CD4-positive, alpha-beta T cell (primary cell): ENCODE measurements at regions of chr2 and their contacts with region 1.

Region 1: DNA sequence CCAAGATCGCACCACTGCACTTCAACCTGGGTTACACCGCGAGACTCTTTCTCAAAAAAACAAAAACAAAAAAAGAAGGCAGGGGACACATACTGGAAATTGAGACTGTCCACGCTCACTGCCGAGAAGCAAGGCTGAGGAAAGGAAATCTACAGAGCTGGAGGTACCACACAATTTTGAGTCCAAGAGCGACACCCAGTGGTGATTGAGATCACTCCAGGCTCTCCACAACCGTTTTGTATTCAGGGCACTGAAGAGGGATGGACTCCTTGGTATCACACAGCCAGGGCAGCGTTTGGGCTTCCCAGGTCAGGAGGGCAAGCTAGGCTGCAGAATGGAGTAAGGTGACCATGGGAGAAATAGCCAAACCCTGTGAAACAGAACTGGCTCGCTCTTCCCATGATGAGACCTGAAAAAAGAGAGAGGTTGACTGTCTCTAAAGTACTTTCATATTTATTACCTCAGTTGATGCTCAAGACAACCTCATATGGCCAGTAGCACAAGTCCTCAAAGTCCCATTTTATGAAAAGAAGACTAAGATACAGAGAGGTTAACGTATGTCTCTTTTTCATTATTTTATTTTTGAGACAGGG is 74.5 kb upstream of the YPEL5 start:
- DNase-seq: peak; percentile 17 to 75 (median 46)
- ATAC-seq: peak; percentile 71
- H3K4me3 ChIP-seq: no peak overlapping the region
- H3K4me3 Mint-ChIP-seq: no peak overlapping the region
- H3K27ac ChIP-seq: no peak overlapping the region
- H3K27ac Mint-ChIP-seq: no peak overlapping the region
- H3K4me1 ChIP-seq: peaks cover 3% of the 10 kb centered on the region
- H3K4me1 Mint-ChIP-seq: no peaks in the 10 kb centered on the region
- H3K27me3 ChIP-seq: peaks cover 17 to 21% of the 10 kb centered on the region in 2 experiments
- H3K27me3 Mint-ChIP-seq: peaks cover 45% of the 10 kb centered on the region
- CTCF ChIP-seq: peak; percentile 58

Region 2: DNA sequence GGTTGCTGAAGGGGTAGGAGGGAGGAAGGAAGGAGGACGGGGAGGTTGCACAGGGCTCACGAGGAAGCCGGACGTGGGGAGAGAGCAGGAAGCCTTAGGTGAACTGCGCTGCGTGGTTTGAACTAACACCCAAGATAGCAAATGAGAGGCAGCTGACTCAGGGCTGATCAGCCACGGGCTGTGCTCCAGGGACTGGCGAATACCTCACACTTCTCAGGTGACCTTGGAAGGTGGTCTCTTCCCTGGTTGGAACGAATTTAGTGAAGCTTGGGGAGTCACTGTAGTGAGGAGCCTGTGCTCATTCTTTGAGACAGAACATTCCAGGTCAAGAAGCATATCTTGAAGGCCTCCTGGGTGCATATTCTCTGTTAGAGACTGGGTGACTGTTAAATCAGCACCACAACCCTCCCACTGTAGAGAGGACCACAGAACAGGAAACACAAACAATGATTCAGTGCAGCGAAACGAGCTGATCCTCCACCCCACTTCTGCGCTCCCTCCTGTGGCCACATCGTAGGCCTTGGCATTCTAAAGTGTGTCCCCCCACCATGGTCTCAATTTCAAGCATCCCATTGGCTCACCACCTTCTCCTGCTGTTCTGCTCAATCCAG is 1057.4 kb before region 1 on chr2:
- CTCF ChIA-PET with region 1: no interaction called
- POLR2A ChIA-PET with region 1: no interaction called
- intact Hi-C with region 1: no loop called
- DNase-seq: peak; percentile 57 to 90 (median 72)
- ATAC-seq: peak; percentile 66
- H3K4me3 ChIP-seq: peak overlapping the region; percentile 37
- H3K4me3 Mint-ChIP-seq: peak overlapping the region; percentile 82
- H3K27ac ChIP-seq: peak overlapping the region; percentile 81 to 86
- H3K27ac Mint-ChIP-seq: peak overlapping the region; percentile 99
- H3K4me1 ChIP-seq: peaks cover 84% of the 10 kb centered on the region
- H3K4me1 Mint-ChIP-seq: peaks cover 73% of the 10 kb centered on the region
- H3K27me3 ChIP-seq: no peaks in the 10 kb centered on the region
- H3K27me3 Mint-ChIP-seq: no peaks in the 10 kb centered on the region
- CTCF ChIP-seq: peak; percentile 34

Region 3: GRCh38 chr2:29309090-29310029 is 763.0 kb before region 1 on chr2:
- CTCF ChIA-PET with region 1: no interaction called
- POLR2A ChIA-PET with region 1: no interaction called
- intact Hi-C with region 1: loop called in 1 of 2 experiments (anchors 10 kb)
- DNase-seq: peak in 10 of 14 experiments; percentile 6 to 71 (median 19)
- ATAC-seq: peak; percentile 70
- H3K4me3 ChIP-seq: no peak overlapping the region
- H3K4me3 Mint-ChIP-seq: no peak overlapping the region
- H3K27ac ChIP-seq: no peak overlapping the region
- H3K27ac Mint-ChIP-seq: no peak overlapping the region
- H3K4me1 ChIP-seq: peaks cover 6% of the 10 kb centered on the region
- H3K4me1 Mint-ChIP-seq: peaks cover 3% of the 10 kb centered on the region
- H3K27me3 ChIP-seq: peaks cover 0 to 3% of the 10 kb centered on the region in 2 experiments
- H3K27me3 Mint-ChIP-seq: peaks cover 33% of the 10 kb centered on the region
- CTCF ChIP-seq: peak; percentile 74

Region 4: GRCh38 chr2:29923110-29923721 is 149.1 kb before region 1 on chr2:
- CTCF ChIA-PET with region 1: no interaction called
- POLR2A ChIA-PET with region 1: no interaction called
- intact Hi-C with region 1: loop called (anchors 2 to 5 kb)
- DNase-seq: peak in 13 of 14 experiments; percentile 7 to 57 (median 22)
- ATAC-seq: no peak
- H3K4me3 ChIP-seq: no peak overlapping the region
- H3K4me3 Mint-ChIP-seq: peak overlapping the region; percentile 38
- H3K27ac ChIP-seq: no peak overlapping the region
- H3K27ac Mint-ChIP-seq: no peak overlapping the region
- H3K4me1 ChIP-seq: peaks cover 16% of the 10 kb centered on the region
- H3K4me1 Mint-ChIP-seq: peaks cover 14% of the 10 kb centered on the region
- H3K27me3 ChIP-seq: peaks cover 45 to 57% of the 10 kb centered on the region in 2 experiments
- H3K27me3 Mint-ChIP-seq: peaks cover 76% of the 10 kb centered on the region
- CTCF ChIP-seq: peak; percentile 91